ENCODE measurements at regions of chr2 and their contacts with region 1.

Region 1: DNA sequence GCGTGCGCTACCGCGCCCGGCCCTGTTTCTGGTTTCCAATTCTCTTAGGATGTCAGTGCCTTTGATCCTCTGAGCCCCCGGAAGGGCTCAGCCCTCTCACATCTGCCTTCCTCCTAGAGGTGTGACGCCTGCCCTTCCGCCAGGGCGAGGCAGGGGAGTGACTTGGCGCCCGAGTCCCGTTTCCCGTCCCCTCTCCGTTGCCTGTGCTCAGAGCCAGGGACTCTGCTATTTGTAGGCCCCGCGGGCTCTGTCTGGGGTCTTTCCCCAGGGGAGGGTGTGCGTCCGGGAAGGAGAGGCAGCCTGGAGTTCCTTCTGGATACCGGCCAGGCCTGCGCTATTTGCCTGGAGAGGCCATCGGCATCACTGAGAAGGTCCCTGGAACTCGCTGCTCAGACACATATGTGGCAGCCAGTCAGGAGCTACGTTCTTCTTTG is 103.7 kb upstream of the TAF1B start:
- DNase-seq: no peak
- ATAC-seq: no peak
- H3K4me3 ChIP-seq: no peak overlapping the region
- H3K27ac ChIP-seq: no peak overlapping the region; the same call in 1 of the 2 replicates
- H3K4me1 ChIP-seq: peaks cover 7% of the 10 kb centered on the region
- H3K27me3 ChIP-seq: no peaks in the 10 kb centered on the region; a peak in 1 of 4 replicates
- CTCF ChIP-seq: no peak
- EP300 ChIP-seq: no peak
- POLR2A ChIP-seq: no peak
- RAD21 ChIP-seq: no peak

Region 2: GRCh38 chr2:9693211-9693520 is 46.4 kb before region 1 on chr2:
- CTCF ChIA-PET with region 1: no interaction called
- POLR2A ChIA-PET with region 1: no interaction called
- RAD21 ChIA-PET with region 1: no interaction called
- SMC1A ChIA-PET with region 1: no interaction called
- in situ Hi-C with region 1: no loop called
- intact Hi-C with region 1: loop called (anchors 5 kb)
- DNase-seq: no peak
- ATAC-seq: peak; percentile 43
- H3K4me3 ChIP-seq: no peak overlapping the region
- H3K27ac ChIP-seq: no peak overlapping the region
- H3K4me1 ChIP-seq: peaks cover 5% of the 10 kb centered on the region
- H3K27me3 ChIP-seq: no peaks in the 10 kb centered on the region
- CTCF ChIP-seq: no peak
- EP300 ChIP-seq: no peak
- POLR2A ChIP-seq: no peak
- RAD21 ChIP-seq: no peak